Posterior vena cava (tissue), 2 donors: ENCODE measurements at regions of chr12 and their contacts with region 1.

Region 1: GRCh38 chr12:85883763-85884162 is 9.7 kb downstream of the NTS start:
- DNase-seq: no peak

Region 2: DNA sequence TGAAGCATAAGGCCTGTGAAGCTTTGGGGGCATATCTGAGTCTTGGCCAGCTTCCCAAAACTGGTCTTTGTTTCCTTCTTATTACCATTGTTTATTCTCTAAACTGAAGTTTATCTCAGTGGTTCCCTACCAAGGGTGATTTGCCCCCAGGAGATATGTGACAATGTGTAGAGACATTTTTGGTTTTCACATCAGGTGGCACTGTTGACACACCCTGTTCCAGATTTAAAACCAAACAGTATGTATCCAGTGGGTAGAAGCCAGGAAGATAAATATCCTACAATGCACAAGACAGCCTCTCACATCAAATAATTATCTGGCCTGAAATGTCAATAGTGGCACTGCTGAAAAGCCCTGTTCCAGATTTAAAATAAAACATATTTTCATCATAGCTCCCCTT is 69.6 kb before region 1 on chr12:
- intact Hi-C with region 1: loop called in 1 of 2 experiments (anchors 2 kb)
- DNase-seq: no peak

Region 3: GRCh38 chr12:85843606-85844285 is 40.0 kb before region 1 on chr12:
- intact Hi-C with region 1: no loop called
- DNase-seq: no peak